ENCODE measurements at regions of chr21 and their contacts with region 1.

Region 1: GRCh38 chr21:36976882-36977651 is 10.6 kb upstream of the HLCS start:
- DNase-seq: peak; percentile 59
- ATAC-seq: peak; percentile 78
- H3K4me3 ChIP-seq: 0 out of 2 replicates have a peak overlapping the region, but pooled peaks have one; percentile 17
- H3K27ac ChIP-seq: no peak overlapping the region
- H3K4me1 ChIP-seq: peaks cover 15% of the 10 kb centered on the region
- H3K27me3 ChIP-seq: no peaks in the 10 kb centered on the region
- CTCF ChIP-seq: peak; percentile 60 to 92 (median 75); a peak in 5 of 6 replicates
- EP300 ChIP-seq: no peak
- POLR2A ChIP-seq: no peak
- RAD21 ChIP-seq: peak; percentile 79

Region 2: DNA sequence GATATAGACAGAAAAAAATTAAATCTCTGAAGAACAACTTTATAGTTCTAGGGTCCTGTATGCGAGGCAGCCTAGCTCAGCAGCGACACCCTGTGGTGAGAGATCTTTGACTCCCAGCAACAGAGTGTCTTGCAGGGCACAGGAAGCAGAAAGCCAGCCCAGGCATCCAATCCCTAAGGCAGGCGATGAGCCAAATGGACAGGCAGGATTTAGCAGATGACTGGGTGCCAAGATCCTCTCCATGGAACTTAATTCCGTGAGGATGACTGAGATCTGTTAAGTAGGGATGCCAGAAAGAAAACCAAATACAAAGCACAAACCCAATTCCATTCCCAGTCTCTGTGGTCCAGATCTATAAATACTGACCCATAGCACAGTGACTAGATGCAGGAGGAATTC is 49.3 kb before region 1 on chr21:
- CTCF ChIA-PET with region 1: no interaction called
- POLR2A ChIA-PET with region 1: no interaction called
- RAD21 ChIA-PET with region 1: no interaction called
- SMC1A ChIA-PET with region 1: no interaction called
- in situ Hi-C with region 1: no loop called
- intact Hi-C with region 1: no loop called
- DNase-seq: peak; percentile 12
- ATAC-seq: peak; percentile 98
- H3K4me3 ChIP-seq: no peak overlapping the region
- H3K27ac ChIP-seq: no peak overlapping the region
- H3K4me1 ChIP-seq: no peaks in the 10 kb centered on the region
- H3K27me3 ChIP-seq: no peaks in the 10 kb centered on the region
- CTCF ChIP-seq: peak; percentile 86 to 92 (median 89)
- EP300 ChIP-seq: no peak
- POLR2A ChIP-seq: no peak
- RAD21 ChIP-seq: peak; percentile 94

Region 3: DNA sequence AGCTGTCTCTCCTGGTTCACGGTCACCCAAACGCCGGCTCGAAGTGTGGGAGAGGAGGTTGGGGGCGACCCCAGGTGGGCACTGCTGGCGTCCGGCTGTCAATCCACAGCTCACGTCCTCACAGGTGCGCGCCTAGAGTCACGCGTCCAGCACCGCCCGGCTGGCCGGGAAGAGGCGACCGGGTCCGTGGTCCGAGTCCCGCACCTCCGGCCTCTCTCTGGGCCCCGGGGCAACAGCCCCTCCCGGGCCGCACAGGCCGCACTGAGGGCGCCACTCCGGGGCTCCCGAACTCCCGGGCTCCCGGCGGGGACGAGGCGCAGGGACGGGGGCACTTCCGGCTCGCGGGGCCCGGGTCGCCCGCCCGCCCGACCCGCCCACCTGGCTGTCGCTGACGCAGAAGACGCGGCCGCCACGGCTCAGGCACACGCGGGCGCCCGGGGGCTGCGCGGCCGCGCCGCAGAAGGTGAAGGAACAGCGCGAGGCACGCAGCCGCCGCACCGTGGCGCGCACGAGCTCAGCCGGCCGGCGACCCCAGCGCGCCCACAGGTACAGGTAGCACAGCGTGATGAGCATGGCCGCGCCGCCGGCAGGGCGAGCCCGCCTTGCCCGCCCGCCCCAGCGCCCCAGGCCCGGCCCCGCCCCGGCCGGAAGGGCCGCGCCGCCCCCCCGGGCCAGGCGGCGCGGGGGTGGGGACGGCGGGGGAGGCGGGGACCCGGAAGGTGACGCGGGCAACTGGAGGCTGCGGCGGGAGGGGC is 10.8 kb before region 1 on chr21 and contains the start of gene HLCS:
- CTCF ChIA-PET with region 1: interaction called, 22 read pairs
- POLR2A ChIA-PET with region 1: interaction called, 4 read pairs
- RAD21 ChIA-PET with region 1: interaction called, 14 read pairs
- SMC1A ChIA-PET with region 1: interaction called, 8 read pairs
- in situ Hi-C with region 1: no loop called
- intact Hi-C with region 1: no loop called
- DNase-seq: no peak
- ATAC-seq: peak; percentile 84
- H3K4me3 ChIP-seq: peak within 1 kb of the TSS; percentile 88
- H3K27ac ChIP-seq: peak within 1 kb of the TSS; percentile 49
- H3K4me1 ChIP-seq: peaks cover 15% of the 10 kb centered on the region
- H3K27me3 ChIP-seq: no peaks in the 10 kb centered on the region
- CTCF ChIP-seq: peak; percentile 10 to 40 (median 26); a peak in 3 of 6 replicates
- EP300 ChIP-seq: no peak
- POLR2A ChIP-seq: peak; percentile 87
- RAD21 ChIP-seq: no peak
- polyA plus RNA-seq, gene HLCS: 1.5 to 1.8 TPM

Region 4: DNA sequence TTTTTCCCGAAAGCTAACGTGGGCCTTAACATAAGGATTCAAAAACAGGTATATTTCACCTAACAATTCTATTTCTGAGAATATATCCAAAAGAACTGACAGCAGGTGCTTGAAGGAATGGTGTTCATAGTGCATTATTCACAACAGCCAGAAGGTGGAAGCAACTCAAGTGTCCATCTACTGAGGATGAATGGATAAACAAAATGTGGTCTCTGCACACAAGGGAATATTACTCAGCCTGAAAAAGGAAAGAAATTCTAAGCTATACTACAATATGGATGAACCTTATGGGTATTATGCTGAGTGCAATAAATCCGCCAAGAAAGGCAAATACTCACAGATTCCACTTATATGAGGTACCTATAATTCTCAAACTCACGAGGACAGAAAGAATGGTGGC is 23.3 kb after region 1 on chr21:
- CTCF ChIA-PET with region 1: interaction called, 10 read pairs
- POLR2A ChIA-PET with region 1: no interaction called
- RAD21 ChIA-PET with region 1: interaction called, 7 read pairs
- SMC1A ChIA-PET with region 1: no interaction called
- in situ Hi-C with region 1: no loop called
- intact Hi-C with region 1: no loop called
- DNase-seq: no peak
- ATAC-seq: no peak
- H3K4me3 ChIP-seq: no peak overlapping the region
- H3K27ac ChIP-seq: no peak overlapping the region
- H3K4me1 ChIP-seq: no peaks in the 10 kb centered on the region
- H3K27me3 ChIP-seq: no peaks in the 10 kb centered on the region
- CTCF ChIP-seq: 0 out of 6 replicates have a peak, but pooled peaks of 1 of the 3 experiments have one; percentile 8
- EP300 ChIP-seq: no peak
- POLR2A ChIP-seq: no peak
- RAD21 ChIP-seq: no peak

Region 5: GRCh38 chr21:37072988-37073416 is 95.9 kb after region 1 on chr21 and contains the starts of genes PIGP and TTC3:
- CTCF ChIA-PET with region 1: interaction called, 10 read pairs
- POLR2A ChIA-PET with region 1: no interaction called
- RAD21 ChIA-PET with region 1: no interaction called
- SMC1A ChIA-PET with region 1: interaction called, 6 read pairs
- in situ Hi-C with region 1: no loop called
- intact Hi-C with region 1: loop called (anchors 5 kb)
- DNase-seq: peak; percentile 70
- ATAC-seq: peak; percentile 78
- H3K4me3 ChIP-seq: peak within 1 kb of the TSS; percentile 90
- H3K27ac ChIP-seq: peak within 1 kb of the TSS; percentile 96
- H3K4me1 ChIP-seq: no peaks in the 10 kb centered on the region; the same call in 1 of the 2 replicates
- H3K27me3 ChIP-seq: no peaks in the 10 kb centered on the region
- CTCF ChIP-seq: no peak
- EP300 ChIP-seq: no peak
- POLR2A ChIP-seq: peak; percentile 87
- RAD21 ChIP-seq: no peak
- polyA plus RNA-seq, gene PIGP: 59.4 to 65.0 TPM
- polyA plus RNA-seq, gene TTC3: 23.1 to 28.6 TPM

Region 6: DNA sequence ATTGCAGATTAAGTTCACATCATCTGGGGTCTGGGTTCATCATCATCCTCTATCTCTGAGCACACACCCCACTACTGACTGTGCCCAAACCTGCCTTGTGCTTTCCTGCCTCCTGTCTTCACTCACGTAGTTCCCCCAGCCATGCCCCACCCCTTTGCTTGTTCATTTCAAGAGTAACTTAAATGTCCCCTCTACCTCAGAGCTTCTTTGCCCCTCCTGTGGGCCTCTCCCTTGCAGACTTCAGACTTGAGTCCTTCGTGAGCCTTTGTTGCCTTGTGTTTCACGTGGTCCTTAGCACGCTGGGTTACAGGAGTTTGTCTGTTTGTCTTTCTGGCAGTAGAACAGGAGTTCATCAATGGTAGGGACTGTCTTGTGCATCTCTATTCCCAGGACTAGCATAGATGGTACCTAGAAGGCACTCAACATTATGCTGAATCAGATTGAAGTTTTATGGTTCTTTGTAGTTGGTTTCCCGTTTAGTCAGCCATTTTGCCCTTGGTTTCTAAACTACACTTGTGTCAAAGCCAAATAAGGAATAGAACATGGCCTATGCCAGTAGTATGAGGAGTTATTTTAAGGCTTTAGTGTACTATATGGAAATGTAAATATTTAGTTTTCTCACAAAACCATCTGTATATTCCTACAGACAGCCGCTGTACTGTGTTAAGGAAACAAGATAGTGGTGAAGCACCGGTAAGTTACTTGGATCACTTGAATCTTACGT is 182.1 kb after region 1 on chr21:
- CTCF ChIA-PET with region 1: interaction called, 15 read pairs
- POLR2A ChIA-PET with region 1: interaction called, 3 read pairs
- RAD21 ChIA-PET with region 1: interaction called, 3 read pairs
- SMC1A ChIA-PET with region 1: interaction called, 4 read pairs
- in situ Hi-C with region 1: no loop called
- intact Hi-C with region 1: no loop called
- DNase-seq: peak; percentile 42
- ATAC-seq: peak; percentile 95
- H3K4me3 ChIP-seq: no peak overlapping the region
- H3K27ac ChIP-seq: peak overlapping the region; percentile 41
- H3K4me1 ChIP-seq: peaks cover 9% of the 10 kb centered on the region
- H3K27me3 ChIP-seq: no peaks in the 10 kb centered on the region
- CTCF ChIP-seq: no peak
- EP300 ChIP-seq: no peak
- POLR2A ChIP-seq: no peak
- RAD21 ChIP-seq: no peak